A549 (cell line): ENCODE measurements at regions of chr20 and their contacts with region 1.

Region 1: DNA sequence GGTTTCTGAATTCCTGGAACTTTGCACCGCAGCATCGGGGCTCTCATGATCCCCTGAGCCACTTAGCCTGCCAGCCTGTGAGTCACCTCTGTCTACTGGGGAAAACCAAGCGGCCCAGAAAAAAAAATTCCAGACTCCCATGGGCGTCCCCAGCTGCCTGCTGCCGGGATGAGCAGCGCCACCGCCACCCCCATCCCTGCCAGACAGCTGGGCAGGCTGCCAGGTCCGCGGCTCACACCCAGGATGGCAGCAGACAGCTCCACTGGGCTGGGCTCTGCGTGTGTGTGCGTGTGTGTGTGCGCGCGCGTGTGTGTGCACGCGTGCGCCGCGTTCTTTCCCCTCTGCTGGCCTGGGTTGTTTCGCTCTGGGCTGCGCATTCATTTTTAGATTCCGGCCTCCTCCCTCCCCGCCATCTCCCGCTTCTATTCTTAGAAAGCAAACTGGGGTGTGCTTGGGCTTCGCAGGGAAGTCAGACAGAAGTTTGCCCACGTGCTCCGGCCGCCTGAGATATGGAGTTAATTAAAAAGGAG is 38.9 kb upstream of the PMEPA1 start:
- DNase-seq: peak; percentile 96 to 97
- ATAC-seq: peak; percentile 94
- H3K4me3 ChIP-seq: peak overlapping the region; percentile 24
- H3K27ac ChIP-seq: peak overlapping the region; percentile 98
- H3K4me1 ChIP-seq: peaks cover 54% of the 10 kb centered on the region
- CTCF ChIP-seq: 0 out of 3 replicates have a peak, but pooled peaks have one; percentile 7
- EP300 ChIP-seq: peak; percentile 85 to 92
- POLR2A ChIP-seq: no peak
- RAD21 ChIP-seq: peak; percentile 33 to 67; a peak in 4 of 5 replicates

Region 2: GRCh38 chr20:57698117-57698866 is 50.4 kb before region 1 on chr20:
- CTCF ChIA-PET with region 1: interaction called, 3 read pairs
- POLR2A ChIA-PET with region 1: interaction called, 12 read pairs
- DNase-seq: peak; percentile 95 to 99
- ATAC-seq: peak; percentile 77 to 83
- H3K4me3 ChIP-seq: peak overlapping the region; percentile 29
- H3K27ac ChIP-seq: peak overlapping the region; percentile 92 to 97
- H3K4me1 ChIP-seq: peaks cover 95% of the 10 kb centered on the region
- CTCF ChIP-seq: no peak
- EP300 ChIP-seq: peak; percentile 94 to 95; a peak in 4 of 5 replicates
- POLR2A ChIP-seq: no peak
- RAD21 ChIP-seq: peak in 1 of 2 experiments; percentile 44; a peak in 1 of 5 replicates